ENCODE measurements at regions of chr11 and their contacts with region 1.

Region 1: GRCh38 chr11:45964911-45965389 is 42.5 kb downstream of the LARGE2 start:
- DNase-seq: peak; percentile 71 to 80
- H3K4me3 ChIP-seq: no peak overlapping the region
- H3K4me3 Mint-ChIP-seq: no peak overlapping the region
- H3K27ac Mint-ChIP-seq: no peak overlapping the region
- H3K4me1 ChIP-seq: peaks cover 21% of the 10 kb centered on the region
- H3K4me1 Mint-ChIP-seq: peaks cover 14% of the 10 kb centered on the region
- H3K27me3 ChIP-seq: no peaks in the 10 kb centered on the region
- H3K27me3 Mint-ChIP-seq: no peaks in the 10 kb centered on the region
- CTCF ChIP-seq: peak; percentile 92 to 95

Region 2: GRCh38 chr11:45982656-45983470 is 17.9 kb after region 1 on chr11:
- CTCF ChIA-PET with region 1: interaction called, 15 read pairs
- POLR2A ChIA-PET with region 1: no interaction called
- intact Hi-C with region 1: loop called (anchors 1 kb)
- DNase-seq: peak; percentile 65 to 76
- H3K4me3 ChIP-seq: no peak overlapping the region
- H3K4me3 Mint-ChIP-seq: peak overlapping the region; percentile 49
- H3K27ac Mint-ChIP-seq: peak overlapping the region; percentile 83
- H3K4me1 ChIP-seq: peaks cover 8% of the 10 kb centered on the region; the same call in 1 of the 2 replicates
- H3K4me1 Mint-ChIP-seq: peaks cover 23% of the 10 kb centered on the region
- H3K27me3 ChIP-seq: no peaks in the 10 kb centered on the region
- H3K27me3 Mint-ChIP-seq: no peaks in the 10 kb centered on the region
- CTCF ChIP-seq: no peak

Measured in Caco-2 (cell line).